HEK293 (cell line): ENCODE measurements at regions of chrX and their contacts with region 1.

Region 1: DNA sequence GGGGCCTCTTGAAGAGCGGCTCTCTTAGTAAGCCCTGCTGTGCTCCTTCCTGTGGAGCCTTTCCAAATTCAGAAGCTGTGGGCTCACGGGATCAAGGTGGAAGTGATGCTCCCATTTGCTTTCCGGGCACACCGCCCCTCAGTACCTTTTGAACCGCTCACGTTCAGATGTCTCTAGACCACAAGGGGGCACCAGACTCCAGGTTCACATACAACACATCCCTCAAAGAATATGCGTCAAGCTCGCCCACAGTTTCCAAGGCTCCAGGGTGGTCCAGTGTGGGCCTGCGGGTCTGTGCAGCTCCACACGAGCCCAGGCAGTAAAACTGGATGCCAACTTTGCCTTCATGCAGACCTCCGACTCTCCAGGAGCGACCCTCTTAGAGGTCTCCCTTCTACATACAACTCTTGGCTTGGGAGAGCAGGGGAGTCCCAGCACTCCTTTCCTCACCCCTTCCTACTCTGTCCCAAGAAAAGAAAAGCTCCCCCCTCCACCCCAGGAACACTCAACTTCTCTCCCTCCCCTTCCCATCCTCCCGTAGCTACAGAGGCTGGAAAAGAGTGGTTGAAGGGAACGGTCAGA is 11.0 kb downstream of the SUPT20HL1 start:
- H3K4me3 ChIP-seq: no peak overlapping the region
- H3K27ac ChIP-seq: no peak overlapping the region
- H3K4me1 ChIP-seq: no peaks in the 10 kb centered on the region
- CTCF ChIP-seq: peak; percentile 67

Region 2: GRCh38 chrX:24357106-24357505 is 14.4 kb before region 1 on chrX:
- CTCF ChIA-PET with region 1: interaction called, 30 read pairs
- POLR2A ChIA-PET with region 1: no interaction called
- H3K4me3 ChIP-seq: no peak overlapping the region
- H3K27ac ChIP-seq: no peak overlapping the region
- H3K4me1 ChIP-seq: no peaks in the 10 kb centered on the region
- CTCF ChIP-seq: no peak

Region 3: GRCh38 chrX:24395775-24396174 is 24.3 kb after region 1 on chrX:
- CTCF ChIA-PET with region 1: interaction called, 85 read pairs
- POLR2A ChIA-PET with region 1: no interaction called
- H3K4me3 ChIP-seq: no peak overlapping the region
- H3K27ac ChIP-seq: no peak overlapping the region
- H3K4me1 ChIP-seq: peaks cover 14% of the 10 kb centered on the region
- CTCF ChIP-seq: peak; percentile 71

Region 4: GRCh38 chrX:24498975-24499374 is 127.5 kb after region 1 on chrX:
- CTCF ChIA-PET with region 1: interaction called, 41 read pairs
- POLR2A ChIA-PET with region 1: no interaction called
- H3K4me3 ChIP-seq: no peak overlapping the region
- H3K27ac ChIP-seq: no peak overlapping the region
- H3K4me1 ChIP-seq: peaks cover 7% of the 10 kb centered on the region
- CTCF ChIP-seq: no peak

Region 5: GRCh38 chrX:24561121-24561520 is 189.6 kb after region 1 on chrX:
- CTCF ChIA-PET with region 1: interaction called, 10 read pairs
- POLR2A ChIA-PET with region 1: no interaction called
- H3K4me3 ChIP-seq: no peak overlapping the region
- H3K27ac ChIP-seq: no peak overlapping the region
- H3K4me1 ChIP-seq: no peaks in the 10 kb centered on the region
- CTCF ChIP-seq: no peak

Region 6: DNA sequence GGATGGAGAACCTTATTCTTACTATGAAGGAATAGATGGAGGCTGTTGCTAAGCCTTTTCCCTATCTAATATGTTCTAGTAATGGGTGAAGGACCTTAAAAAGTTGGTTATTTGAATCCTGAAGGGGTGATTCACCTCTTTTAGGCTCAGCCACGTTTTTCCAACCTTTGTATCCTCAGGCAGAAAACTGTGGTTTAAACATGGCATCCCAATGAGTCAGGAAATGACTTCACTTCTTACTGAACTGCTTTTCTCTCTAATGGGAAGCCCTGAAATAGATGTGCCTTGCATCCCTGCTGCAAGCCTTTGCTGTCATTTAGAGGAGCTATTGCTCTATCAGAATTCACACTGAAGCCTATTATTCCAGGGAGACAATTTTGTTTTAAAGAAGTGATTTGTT is 835.3 kb after region 1 on chrX:
- CTCF ChIA-PET with region 1: no interaction called
- POLR2A ChIA-PET with region 1: no interaction called
- H3K4me3 ChIP-seq: no peak overlapping the region
- H3K27ac ChIP-seq: no peak overlapping the region
- H3K4me1 ChIP-seq: no peaks in the 10 kb centered on the region
- CTCF ChIP-seq: no peak